ENCODE measurements at regions of chr3 and their contacts with region 1.

Region 1: GRCh38 chr3:98623572-98624280 is 30.3 kb upstream of the CPOX start:
- DNase-seq: no peak
- H3K4me3 ChIP-seq: no peak overlapping the region
- H3K27ac ChIP-seq: no peak overlapping the region
- H3K4me1 ChIP-seq: no peaks in the 10 kb centered on the region
- H3K27me3 ChIP-seq: no peaks in the 10 kb centered on the region
- CTCF ChIP-seq: no peak

Region 2: DNA sequence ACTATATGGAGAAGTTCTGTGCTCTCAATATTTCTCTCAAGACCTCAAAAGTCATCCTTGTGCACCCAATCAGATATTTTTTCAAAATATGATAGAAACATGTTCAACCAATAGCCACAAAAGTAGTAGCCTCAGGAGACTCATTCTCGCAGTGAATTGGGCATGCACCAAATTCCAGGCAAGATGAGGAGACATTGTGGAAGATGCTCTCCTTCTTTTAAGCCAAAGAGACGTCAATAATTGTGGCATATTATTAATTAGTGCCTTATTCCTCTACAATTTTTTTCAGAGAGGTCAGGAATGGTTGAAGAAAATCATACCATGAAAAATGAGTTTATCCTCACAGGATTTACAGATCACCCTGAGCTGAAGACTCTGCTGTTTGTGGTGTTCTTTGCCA is 126.3 kb before region 1 on chr3 and contains the start of gene OR5K2:
- intact Hi-C with region 1: no loop called
- DNase-seq: no peak
- H3K4me3 ChIP-seq: no peak within 1 kb of the TSS
- H3K27ac ChIP-seq: no peak within 1 kb of the TSS
- H3K4me1 ChIP-seq: no peaks in the 10 kb centered on the region
- H3K27me3 ChIP-seq: no peaks in the 10 kb centered on the region
- CTCF ChIP-seq: no peak

Region 3: GRCh38 chr3:98563661-98564281 is 60.0 kb before region 1 on chr3:
- intact Hi-C with region 1: no loop called
- DNase-seq: no peak
- H3K4me3 ChIP-seq: no peak overlapping the region
- H3K27ac ChIP-seq: no peak overlapping the region
- H3K4me1 ChIP-seq: no peaks in the 10 kb centered on the region
- H3K27me3 ChIP-seq: peaks cover 0 to 2% of the 10 kb centered on the region in 2 donors
- CTCF ChIP-seq: no peak

Region 4: GRCh38 chr3:98977520-98977919 is 353.8 kb after region 1 on chr3:
- intact Hi-C with region 1: loop called (anchors 10 kb)
- DNase-seq: no peak
- H3K4me3 ChIP-seq: no peak overlapping the region
- H3K27ac ChIP-seq: no peak overlapping the region
- H3K4me1 ChIP-seq: no peaks in the 10 kb centered on the region
- H3K27me3 ChIP-seq: no peaks in the 10 kb centered on the region
- CTCF ChIP-seq: no peak

Measured in tibial artery (tissue), 4 donors.